Right ventricle myocardium inferior (tissue), 1 donor: ENCODE measurements at regions of chr9 and their contacts with region 1.

Region 1: DNA sequence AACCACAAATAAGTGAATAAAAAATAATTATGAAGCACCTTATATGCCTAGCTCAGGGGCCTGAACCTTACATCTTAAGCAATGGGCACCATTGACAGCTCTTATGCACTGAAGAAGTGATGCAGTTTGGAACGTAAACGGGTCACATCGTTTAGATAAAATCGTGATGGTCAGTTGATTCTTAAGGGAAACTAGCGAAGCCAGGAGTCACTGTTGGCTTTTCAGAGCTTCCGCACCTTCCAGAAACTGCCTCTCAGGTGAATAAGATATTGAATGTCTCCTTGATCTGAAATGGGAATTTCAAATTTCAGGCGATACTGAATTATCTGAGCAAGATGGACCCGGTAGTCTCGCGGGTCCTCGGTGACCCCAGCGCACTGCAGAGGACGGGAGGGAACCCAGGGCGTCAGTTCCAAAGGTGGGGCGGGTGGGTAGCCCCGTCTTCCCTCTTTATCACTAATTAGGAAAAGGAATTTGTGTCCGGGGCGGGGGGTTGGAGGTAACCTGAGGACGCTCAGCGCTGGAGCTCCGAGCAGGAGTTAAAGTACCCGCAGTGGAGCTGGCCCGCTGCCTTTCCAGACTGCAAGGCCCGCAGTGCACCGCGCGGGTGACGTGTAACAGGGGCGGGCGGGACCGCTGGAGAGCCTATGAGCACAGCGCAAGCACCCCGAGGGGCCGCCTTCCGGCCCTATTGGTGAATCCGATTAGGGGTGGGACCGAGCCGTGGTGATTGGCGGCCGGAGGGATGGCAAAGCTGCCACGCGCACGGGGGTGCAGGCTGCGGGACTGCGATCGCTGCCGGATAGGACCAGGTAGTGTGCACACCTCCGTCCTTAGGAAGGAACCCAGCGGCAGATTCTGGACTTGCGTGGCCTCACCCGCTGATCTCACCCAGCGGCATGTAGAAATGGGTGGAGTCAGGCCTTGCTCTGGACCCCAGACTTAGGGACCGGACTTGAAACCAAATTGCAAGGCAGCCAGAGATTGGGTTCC is 19.7 kb upstream of the GARNL3 start:
- DNase-seq: peak; percentile 99
- ATAC-seq: peak; percentile 100

Region 2: DNA sequence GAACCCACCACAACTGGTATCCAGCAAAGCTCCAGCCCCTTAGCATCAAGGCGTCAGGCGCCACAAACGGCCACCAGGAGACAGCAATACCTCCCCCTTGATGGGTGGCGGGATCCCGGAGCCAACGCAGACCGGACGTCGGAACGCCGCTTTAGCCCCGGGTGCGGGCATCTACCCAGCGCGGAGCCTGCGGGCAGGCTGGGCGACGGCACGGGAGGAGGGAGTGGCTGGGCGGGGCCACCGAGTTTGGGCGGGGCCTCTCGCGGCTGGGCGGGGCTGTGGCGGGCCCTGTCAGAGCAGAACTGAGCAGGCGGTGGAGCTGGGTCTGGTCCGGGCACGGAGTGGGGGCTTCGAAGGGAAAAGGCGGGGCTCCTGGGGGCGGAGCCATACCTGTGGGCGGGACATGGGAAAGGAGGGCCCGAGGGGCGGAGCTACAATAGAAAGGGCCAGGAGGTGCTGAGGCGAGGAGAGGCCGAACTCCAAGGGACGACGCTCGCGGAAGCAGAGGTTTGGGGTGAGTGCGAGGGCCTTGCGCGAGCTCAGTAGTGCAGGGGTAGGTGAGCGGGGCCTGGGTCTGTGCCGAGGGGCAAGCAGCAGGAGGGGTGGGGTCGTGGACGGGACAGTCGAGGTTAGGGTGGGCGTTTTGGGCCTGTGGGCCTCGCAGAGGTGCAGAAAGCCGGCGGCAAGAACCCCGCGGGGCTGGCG is 20.6 kb before region 1 on chr9:
- intact Hi-C with region 1: loop called (anchors 2 kb)
- DNase-seq: peak; percentile 95
- ATAC-seq: peak; percentile 87

Region 3: GRCh38 chr9:127347831-127348779 is 103.2 kb after region 1 on chr9:
- intact Hi-C with region 1: no loop called
- DNase-seq: no peak
- ATAC-seq: no peak